ENCODE measurements at regions of chr9 and their contacts with region 1.

Region 1: GRCh38 chr9:110183208-110184145 is 24.5 kb downstream of the C9orf152 start:
- H3K4me3 Mint-ChIP-seq: no peak overlapping the region
- H3K27ac Mint-ChIP-seq: no peak overlapping the region
- H3K4me1 Mint-ChIP-seq: peaks cover 10% of the 10 kb centered on the region
- H3K27me3 Mint-ChIP-seq: no peaks in the 10 kb centered on the region

Region 2: GRCh38 chr9:110217656-110218099 is 34.2 kb after region 1 on chr9:
- intact Hi-C with region 1: loop called (anchors 1 kb)
- H3K4me3 Mint-ChIP-seq: no peak overlapping the region
- H3K27ac Mint-ChIP-seq: no peak overlapping the region
- H3K4me1 Mint-ChIP-seq: no peaks in the 10 kb centered on the region
- H3K27me3 Mint-ChIP-seq: no peaks in the 10 kb centered on the region

Region 3: DNA sequence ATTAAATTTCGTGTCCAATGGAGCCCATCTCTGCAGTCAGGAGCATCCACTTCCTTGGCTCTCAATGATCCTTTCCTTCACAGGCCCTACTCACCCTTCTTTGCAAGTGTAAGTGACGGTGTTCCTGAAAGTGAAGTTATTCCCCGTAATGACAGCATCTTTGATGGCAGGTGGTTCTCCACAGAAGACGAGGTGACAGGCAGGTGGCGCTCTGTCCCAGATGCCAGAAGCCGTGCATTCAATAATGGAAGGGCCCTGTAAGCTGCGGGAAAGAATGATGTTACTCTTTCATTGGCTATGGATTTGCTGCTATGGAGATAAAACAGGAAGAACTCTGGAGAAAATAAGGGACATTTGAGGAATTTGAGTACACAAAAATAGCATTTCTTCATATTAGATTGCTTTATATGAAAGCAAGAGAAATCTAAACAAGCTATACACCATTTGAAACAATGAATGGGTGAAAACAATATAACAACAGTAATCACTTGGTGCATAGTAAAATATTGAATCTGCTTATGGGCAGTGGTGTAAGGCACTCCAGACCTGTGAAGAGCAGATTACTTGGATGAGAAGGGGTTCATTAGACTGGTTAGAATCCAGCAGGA is 244.1 kb after region 1 on chr9:
- intact Hi-C with region 1: loop called (anchors 5 kb)
- H3K4me3 Mint-ChIP-seq: no peak overlapping the region
- H3K27ac Mint-ChIP-seq: no peak overlapping the region
- H3K4me1 Mint-ChIP-seq: peaks cover 5% of the 10 kb centered on the region
- H3K27me3 Mint-ChIP-seq: peaks cover 3% of the 10 kb centered on the region

Region 4: DNA sequence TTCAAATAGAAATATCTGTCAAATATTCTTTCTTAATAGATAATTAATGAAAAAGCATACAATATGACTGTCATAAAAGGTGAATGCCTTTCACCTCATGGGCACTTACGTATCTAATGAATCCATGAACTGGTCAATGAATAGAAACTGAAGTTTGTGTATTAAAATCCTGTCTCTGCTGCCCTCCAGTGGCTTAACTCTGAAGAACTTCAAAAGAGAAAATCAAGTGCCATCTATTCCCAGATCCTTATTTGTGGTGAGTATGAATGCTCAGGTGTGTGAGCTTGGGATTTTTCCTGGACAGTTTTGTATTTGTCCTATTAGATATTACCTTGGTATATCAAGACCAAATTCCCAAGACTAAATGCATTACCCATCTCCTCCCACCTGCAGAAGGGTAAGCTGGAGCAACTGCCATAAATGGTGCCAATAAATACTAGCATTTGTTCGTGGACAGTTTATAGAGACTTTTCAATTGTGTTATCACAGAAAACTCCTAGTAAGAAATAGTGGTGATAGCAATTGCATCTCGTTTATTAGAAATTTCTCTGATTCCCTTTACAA is 440.1 kb after region 1 on chr9:
- intact Hi-C with region 1: loop called (anchors 2 kb)
- H3K4me3 Mint-ChIP-seq: no peak overlapping the region
- H3K27ac Mint-ChIP-seq: no peak overlapping the region
- H3K4me1 Mint-ChIP-seq: peaks cover 14% of the 10 kb centered on the region
- H3K27me3 Mint-ChIP-seq: peaks cover 3% of the 10 kb centered on the region

Measured in dendritic cell treated with granulocyte-macrophage colony-stimulating factor and Interleukin-4, amounts not matched to agents 40 ng/mL and 50 ng/mL, for 4 days (primary cell).